Vagina (tissue), 2 donors: ENCODE measurements at regions of chr6 and their contacts with region 1.

Region 1: GRCh38 chr6:110958329-110959192 is at the start of gene GTF3C6:
- DNase-seq: peak in 1 of 2 donors; percentile 89
- H3K4me3 ChIP-seq: peak within 1 kb of the TSS; percentile 74 to 84
- H3K27ac ChIP-seq: peak within 1 kb of the TSS; percentile 86
- H3K4me1 ChIP-seq: peaks cover 20% of the 10 kb centered on the region
- H3K27me3 ChIP-seq: no peaks in the 10 kb centered on the region
- CTCF ChIP-seq: no peak
- POLR2A ChIP-seq: peak in 1 of 2 donors; percentile 52
- total RNA-seq, gene GTF3C6: 25.5 TPM

Region 2: DNA sequence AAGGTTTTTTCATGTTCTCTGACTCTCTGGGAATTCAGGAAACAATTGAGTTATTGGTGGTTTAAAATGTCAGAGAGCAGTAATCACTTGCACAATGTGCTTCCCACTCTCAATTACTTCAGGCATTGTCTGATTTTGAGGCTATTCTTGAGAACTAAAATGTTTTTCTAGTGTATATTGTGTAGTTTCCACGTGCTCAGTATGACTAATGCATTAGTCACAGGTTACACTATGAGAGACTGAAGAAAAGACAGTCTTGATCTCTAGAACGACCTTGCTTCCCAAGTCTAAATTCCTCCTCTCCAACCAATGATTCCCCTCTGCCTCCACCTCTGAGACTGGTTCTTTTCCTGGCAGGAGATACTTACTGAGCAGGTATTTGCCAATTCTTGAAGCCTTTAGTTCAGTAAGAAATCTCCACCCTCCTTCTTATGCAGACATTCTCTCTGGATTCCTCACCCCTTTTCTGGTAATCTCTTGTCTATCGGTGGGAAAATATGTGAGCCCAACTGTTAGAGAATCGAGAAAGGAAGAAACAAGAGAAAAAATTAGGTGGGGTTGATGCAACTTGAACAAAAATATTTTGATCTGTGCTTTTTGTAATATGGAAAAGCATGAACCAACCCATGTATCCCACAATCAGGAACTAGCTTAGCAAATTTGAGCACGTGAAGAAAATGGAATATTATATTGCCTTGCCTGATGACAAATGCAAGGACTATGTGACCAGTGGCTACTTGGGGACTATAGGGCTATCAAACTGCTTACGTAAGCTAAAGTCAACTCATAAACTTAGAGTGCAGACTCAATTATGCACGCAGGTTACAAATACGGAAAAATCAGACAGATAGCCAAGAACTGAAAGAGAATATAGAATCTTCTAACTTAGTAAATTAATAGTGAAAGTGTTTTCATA is 421.1 kb before region 1 on chr6:
- intact Hi-C with region 1: loop called (anchors 10 kb)
- DNase-seq: peak in 1 of 2 donors; percentile 71
- H3K4me3 ChIP-seq: no peak overlapping the region
- H3K27ac ChIP-seq: peak overlapping the region; percentile 15
- H3K4me1 ChIP-seq: peaks cover 34% of the 10 kb centered on the region
- H3K27me3 ChIP-seq: no peaks in the 10 kb centered on the region
- CTCF ChIP-seq: no peak
- POLR2A ChIP-seq: no peak

Region 3: GRCh38 chr6:111057074-111057752 is 98.7 kb after region 1 on chr6:
- intact Hi-C with region 1: no loop called
- DNase-seq: no peak
- H3K4me3 ChIP-seq: no peak overlapping the region
- H3K27ac ChIP-seq: no peak overlapping the region
- H3K4me1 ChIP-seq: no peaks in the 10 kb centered on the region
- H3K27me3 ChIP-seq: no peaks in the 10 kb centered on the region
- CTCF ChIP-seq: peak; percentile 23 to 65 (median 37)
- POLR2A ChIP-seq: no peak

Region 4: DNA sequence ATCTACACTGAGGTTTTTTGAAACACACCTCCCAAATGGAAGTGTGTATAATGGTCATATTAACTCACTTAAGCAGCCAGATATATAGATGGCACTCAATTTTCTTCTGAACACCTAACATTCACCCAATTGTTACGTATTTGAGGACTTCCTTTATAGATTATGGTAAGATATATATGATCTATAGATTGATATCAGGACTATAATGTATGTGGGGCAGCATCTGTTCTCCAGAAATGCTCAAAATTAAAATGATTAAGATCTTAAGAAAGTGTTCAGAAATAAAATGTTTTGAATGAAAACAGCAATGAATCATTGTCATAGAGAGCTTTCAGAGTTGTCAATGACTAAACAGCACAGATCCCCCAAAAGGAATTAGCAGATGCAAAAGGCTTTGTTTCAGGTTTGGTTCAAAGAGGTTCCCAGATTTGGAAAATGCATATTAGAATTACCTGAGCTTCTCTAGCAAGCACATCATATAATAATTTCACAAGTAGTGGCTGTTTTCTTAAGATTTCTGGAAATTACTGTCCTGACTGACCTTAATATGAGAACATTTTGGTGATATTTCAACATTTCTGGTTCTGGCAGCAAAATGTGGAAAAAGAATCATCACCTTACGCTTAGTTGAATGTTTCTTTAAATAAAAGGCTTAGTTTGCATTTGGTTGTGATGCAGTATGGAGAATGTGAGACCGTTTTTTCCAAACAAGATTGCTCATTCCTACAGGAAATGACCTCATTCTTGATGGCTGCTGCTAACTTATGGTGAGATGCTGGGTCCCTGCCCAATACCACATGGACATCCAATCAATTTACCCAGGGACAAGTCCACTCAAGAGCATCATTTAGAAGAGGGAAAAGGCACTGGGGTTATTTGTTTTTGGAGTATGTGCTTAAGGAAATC is 615.6 kb after region 1 on chr6:
- intact Hi-C with region 1: no loop called
- DNase-seq: no peak
- H3K4me3 ChIP-seq: no peak overlapping the region
- H3K27ac ChIP-seq: peak overlapping the region; percentile 67
- H3K4me1 ChIP-seq: peaks cover 28% of the 10 kb centered on the region
- H3K27me3 ChIP-seq: no peaks in the 10 kb centered on the region
- CTCF ChIP-seq: no peak
- POLR2A ChIP-seq: no peak